Activated CD8-positive, alpha-beta T cell treated with anti-CD3 and anti-CD28 coated beads for 36 hours (primary cell): ENCODE measurements at regions of chr3 and their contacts with region 1.

Region 1: DNA sequence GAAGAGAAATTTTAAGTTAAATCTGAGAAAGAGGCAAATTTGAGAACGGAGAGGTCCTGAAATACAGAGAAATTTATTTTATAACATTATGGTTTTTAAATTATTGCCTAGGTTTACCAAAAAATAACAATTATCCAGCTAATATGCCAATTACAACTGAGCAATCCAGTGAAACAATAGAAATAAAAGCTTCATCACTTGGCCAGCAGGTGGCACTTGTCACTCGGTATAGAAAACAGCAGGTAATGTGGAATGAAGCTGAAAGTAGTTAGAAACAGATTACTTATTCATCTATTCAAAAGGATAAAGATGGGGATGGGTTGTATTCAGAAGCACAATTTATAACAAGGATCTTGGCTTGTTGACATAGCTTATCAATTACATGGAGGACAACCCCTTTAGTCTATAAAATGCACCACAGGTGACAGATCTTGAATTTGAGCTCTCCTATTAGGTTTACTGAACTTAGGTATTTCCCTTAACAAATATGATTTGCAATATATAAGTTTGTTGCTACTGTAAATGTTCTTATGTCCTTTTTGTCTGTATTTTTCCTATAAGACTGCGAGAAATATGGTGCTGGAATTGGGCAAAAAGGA is 70.1 kb upstream of the GUCA1C start:
- DNase-seq: peak; percentile 61
- ATAC-seq: peak; percentile 58
- H3K4me3 Mint-ChIP-seq: no peak overlapping the region
- H3K27ac Mint-ChIP-seq: no peak overlapping the region
- H3K4me1 Mint-ChIP-seq: no peaks in the 10 kb centered on the region
- H3K27me3 Mint-ChIP-seq: no peaks in the 10 kb centered on the region
- CTCF ChIP-seq: peak; percentile 92

Region 2: DNA sequence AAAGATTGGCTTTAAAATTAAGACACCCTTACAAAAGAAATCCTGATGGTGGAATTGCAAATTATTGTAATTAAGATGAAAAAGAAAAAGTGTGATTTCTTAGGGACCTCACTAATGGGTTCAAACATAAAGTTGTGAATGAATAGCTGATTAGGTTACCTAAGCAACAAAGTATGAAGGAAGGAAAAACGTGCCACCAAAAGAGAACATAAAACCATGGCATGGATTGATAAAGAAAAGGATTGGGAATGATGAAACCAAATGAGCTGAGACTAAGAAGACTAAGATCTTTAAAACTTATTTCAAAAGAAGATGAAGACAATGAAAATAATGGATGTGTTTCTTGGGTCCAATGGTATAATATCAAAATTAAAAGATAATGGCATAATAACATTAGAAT is 37.9 kb before region 1 on chr3:
- CTCF ChIA-PET with region 1: interaction called, 15 read pairs
- POLR2A ChIA-PET with region 1: no interaction called
- intact Hi-C with region 1: no loop called
- DNase-seq: no peak
- ATAC-seq: no peak
- H3K4me3 Mint-ChIP-seq: no peak overlapping the region
- H3K27ac Mint-ChIP-seq: no peak overlapping the region
- H3K4me1 Mint-ChIP-seq: no peaks in the 10 kb centered on the region
- H3K27me3 Mint-ChIP-seq: peaks cover 20% of the 10 kb centered on the region
- CTCF ChIP-seq: no peak

Region 3: GRCh38 chr3:109059264-109059663 is 35.5 kb after region 1 on chr3:
- CTCF ChIA-PET with region 1: interaction called, 11 read pairs
- POLR2A ChIA-PET with region 1: no interaction called
- intact Hi-C with region 1: no loop called
- DNase-seq: no peak
- ATAC-seq: no peak
- H3K4me3 Mint-ChIP-seq: no peak overlapping the region
- H3K27ac Mint-ChIP-seq: no peak overlapping the region
- H3K4me1 Mint-ChIP-seq: no peaks in the 10 kb centered on the region
- H3K27me3 Mint-ChIP-seq: peaks cover 13% of the 10 kb centered on the region
- CTCF ChIP-seq: no peak

Region 4: DNA sequence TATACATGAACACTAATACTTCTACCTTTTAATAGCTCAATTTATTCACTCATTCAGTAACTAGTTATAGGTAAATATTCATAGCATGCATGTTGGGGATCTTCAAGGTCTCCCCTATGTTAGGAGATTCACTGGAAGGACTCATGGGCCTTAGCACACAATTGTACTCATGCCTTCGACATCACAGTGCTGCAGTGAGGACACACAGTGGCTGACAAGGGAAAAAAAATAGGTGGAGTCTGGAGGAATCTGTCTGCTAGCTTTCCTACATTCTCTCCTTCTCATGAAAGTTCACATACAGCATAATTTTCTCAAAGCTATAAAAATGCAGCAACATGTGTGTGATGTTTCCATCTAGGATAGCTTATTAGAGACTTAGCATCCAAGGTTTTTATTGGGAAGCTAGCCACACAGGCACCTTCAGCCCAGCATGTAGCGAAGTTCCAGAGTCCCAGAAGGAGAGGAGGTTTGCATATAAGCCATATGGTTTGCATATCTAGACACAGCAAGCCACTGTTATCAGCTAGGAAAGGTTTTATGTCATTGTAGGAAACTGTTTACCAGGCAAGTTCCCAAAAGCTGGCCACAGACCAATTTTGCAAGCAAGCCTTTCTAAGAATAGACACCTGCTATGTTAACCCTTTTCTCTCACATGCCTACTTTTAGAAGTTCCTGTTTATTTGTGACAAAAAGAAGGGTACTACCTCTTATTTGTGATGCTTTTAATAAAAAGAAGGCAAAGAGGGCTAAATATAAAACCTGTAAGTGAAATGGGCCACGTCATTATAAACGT is 47.8 kb after region 1 on chr3:
- CTCF ChIA-PET with region 1: interaction called, 12 read pairs
- POLR2A ChIA-PET with region 1: no interaction called
- intact Hi-C with region 1: no loop called
- DNase-seq: no peak
- ATAC-seq: no peak
- H3K4me3 Mint-ChIP-seq: no peak overlapping the region
- H3K27ac Mint-ChIP-seq: no peak overlapping the region
- H3K4me1 Mint-ChIP-seq: peaks cover 6% of the 10 kb centered on the region
- H3K27me3 Mint-ChIP-seq: peaks cover 13% of the 10 kb centered on the region
- CTCF ChIP-seq: no peak

Region 5: GRCh38 chr3:109081746-109082510 is 58.2 kb after region 1 on chr3:
- CTCF ChIA-PET with region 1: interaction called, 61 read pairs
- POLR2A ChIA-PET with region 1: no interaction called
- intact Hi-C with region 1: loop called (anchors 5 kb)
- DNase-seq: peak; percentile 52
- ATAC-seq: peak; percentile 78
- H3K4me3 Mint-ChIP-seq: no peak overlapping the region
- H3K27ac Mint-ChIP-seq: no peak overlapping the region
- H3K4me1 Mint-ChIP-seq: peaks cover 2% of the 10 kb centered on the region
- H3K27me3 Mint-ChIP-seq: peaks cover 21% of the 10 kb centered on the region
- CTCF ChIP-seq: peak; percentile 80

Region 6: GRCh38 chr3:109161487-109162123 is 137.8 kb after region 1 on chr3:
- CTCF ChIA-PET with region 1: no interaction called
- POLR2A ChIA-PET with region 1: no interaction called
- intact Hi-C with region 1: no loop called
- DNase-seq: no peak
- ATAC-seq: no peak
- H3K4me3 Mint-ChIP-seq: no peak overlapping the region
- H3K27ac Mint-ChIP-seq: no peak overlapping the region
- H3K4me1 Mint-ChIP-seq: no peaks in the 10 kb centered on the region
- H3K27me3 Mint-ChIP-seq: peaks cover 2% of the 10 kb centered on the region
- CTCF ChIP-seq: no peak

Region 7: GRCh38 chr3:109224333-109224732 is 200.6 kb after region 1 on chr3:
- CTCF ChIA-PET with region 1: interaction called, 10 read pairs
- POLR2A ChIA-PET with region 1: no interaction called
- intact Hi-C with region 1: no loop called
- DNase-seq: peak; percentile 16
- ATAC-seq: no peak
- H3K4me3 Mint-ChIP-seq: no peak overlapping the region
- H3K27ac Mint-ChIP-seq: no peak overlapping the region
- H3K4me1 Mint-ChIP-seq: no peaks in the 10 kb centered on the region
- H3K27me3 Mint-ChIP-seq: peaks cover 2% of the 10 kb centered on the region
- CTCF ChIP-seq: no peak